Activated naive CD4-positive, alpha-beta T cell treated with anti-CD3 and anti-CD28 coated beads for 36 hours (primary cell): ENCODE measurements at regions of chr10 and their contacts with region 1.

Region 1: GRCh38 chr10:7872041-7872442 is 53.7 kb downstream of the TAF3 start:
- DNase-seq: no peak
- H3K4me3 Mint-ChIP-seq: peak overlapping the region; percentile 64
- H3K27ac Mint-ChIP-seq: no peak overlapping the region
- H3K4me1 Mint-ChIP-seq: peaks cover 6% of the 10 kb centered on the region
- H3K27me3 Mint-ChIP-seq: no peaks in the 10 kb centered on the region

Region 2: GRCh38 chr10:8444630-8445029 is 572.6 kb after region 1 on chr10:
- CTCF ChIA-PET with region 1: interaction called, 5 read pairs
- intact Hi-C with region 1: loop called (anchors 10 kb)
- DNase-seq: peak; percentile 61
- H3K4me3 Mint-ChIP-seq: no peak overlapping the region
- H3K27ac Mint-ChIP-seq: no peak overlapping the region
- H3K4me1 Mint-ChIP-seq: peaks cover 9% of the 10 kb centered on the region
- H3K27me3 Mint-ChIP-seq: no peaks in the 10 kb centered on the region

Region 3: DNA sequence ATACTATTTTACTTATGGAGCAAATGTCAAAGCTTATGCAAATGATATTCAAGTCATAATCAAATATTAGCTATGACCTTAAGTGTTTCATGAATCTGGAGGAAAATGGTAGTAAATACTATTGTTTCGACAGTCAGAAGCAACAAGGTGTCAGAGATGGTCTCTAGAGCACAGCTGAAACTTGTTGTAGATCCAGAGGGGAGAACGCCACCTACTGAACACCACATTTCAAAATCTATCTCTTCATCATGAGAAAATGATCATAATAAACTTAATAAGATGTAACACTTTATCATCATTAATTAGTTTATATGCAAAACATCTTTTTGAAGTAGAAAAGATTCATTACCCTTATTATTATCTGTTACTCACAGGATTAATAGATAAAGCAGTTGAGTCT is 601.2 kb after region 1 on chr10:
- CTCF ChIA-PET with region 1: no interaction called
- intact Hi-C with region 1: loop called (anchors 10 kb)
- DNase-seq: peak; percentile 13
- H3K4me3 Mint-ChIP-seq: no peak overlapping the region
- H3K27ac Mint-ChIP-seq: no peak overlapping the region
- H3K4me1 Mint-ChIP-seq: peaks cover 2% of the 10 kb centered on the region
- H3K27me3 Mint-ChIP-seq: peaks cover 3% of the 10 kb centered on the region